Posterior cingulate gyrus (tissue), 11 donors: ENCODE measurements at regions of chr3 and their contacts with region 1.

Region 1: DNA sequence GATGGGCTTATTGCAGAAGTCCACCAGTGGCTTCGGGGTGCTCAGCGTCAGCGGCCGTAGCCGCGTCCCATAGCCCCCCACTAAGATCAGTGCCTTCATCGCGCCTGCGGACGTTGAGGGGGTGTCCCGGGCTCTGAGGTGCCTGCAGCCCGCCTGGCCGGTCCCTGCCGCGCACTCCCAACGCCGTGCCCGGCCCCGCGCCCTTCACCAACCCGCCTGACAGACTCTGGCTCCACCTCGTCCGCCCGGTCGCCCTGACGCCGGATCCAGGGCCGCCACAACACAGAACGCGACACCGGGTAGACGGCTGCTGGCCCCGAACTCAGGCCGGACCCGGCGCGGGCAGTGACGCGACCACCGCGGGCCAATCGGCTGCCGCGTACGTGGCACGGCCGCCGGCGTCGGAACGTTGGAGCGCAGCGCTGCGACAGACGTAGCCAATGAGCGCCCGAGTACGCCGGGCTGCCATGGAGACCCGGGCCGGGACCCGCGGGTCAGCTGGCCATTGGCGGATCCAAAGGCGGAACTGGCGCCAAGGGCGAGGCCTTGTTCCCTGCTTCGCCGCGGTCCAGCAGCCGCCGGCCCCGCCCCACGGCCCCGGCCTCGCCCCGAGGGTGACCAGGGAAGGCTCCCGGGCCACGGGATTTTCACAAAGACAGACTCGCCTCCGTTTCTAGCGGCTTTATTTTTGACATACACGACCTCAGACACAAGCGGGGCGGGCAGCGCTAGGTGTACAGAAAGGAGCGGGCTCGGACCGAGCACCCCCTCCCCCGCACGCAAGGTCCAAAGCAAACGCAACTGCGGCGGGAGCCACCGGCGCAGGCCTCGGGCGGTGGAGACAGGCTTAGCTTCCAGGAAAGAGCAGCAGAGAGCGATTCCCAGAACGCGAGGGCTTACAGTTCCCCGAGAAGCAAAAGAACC is at the start of gene GMPPB:
- DNase-seq: peak; percentile 92 to 100 (median 97)

Region 2: DNA sequence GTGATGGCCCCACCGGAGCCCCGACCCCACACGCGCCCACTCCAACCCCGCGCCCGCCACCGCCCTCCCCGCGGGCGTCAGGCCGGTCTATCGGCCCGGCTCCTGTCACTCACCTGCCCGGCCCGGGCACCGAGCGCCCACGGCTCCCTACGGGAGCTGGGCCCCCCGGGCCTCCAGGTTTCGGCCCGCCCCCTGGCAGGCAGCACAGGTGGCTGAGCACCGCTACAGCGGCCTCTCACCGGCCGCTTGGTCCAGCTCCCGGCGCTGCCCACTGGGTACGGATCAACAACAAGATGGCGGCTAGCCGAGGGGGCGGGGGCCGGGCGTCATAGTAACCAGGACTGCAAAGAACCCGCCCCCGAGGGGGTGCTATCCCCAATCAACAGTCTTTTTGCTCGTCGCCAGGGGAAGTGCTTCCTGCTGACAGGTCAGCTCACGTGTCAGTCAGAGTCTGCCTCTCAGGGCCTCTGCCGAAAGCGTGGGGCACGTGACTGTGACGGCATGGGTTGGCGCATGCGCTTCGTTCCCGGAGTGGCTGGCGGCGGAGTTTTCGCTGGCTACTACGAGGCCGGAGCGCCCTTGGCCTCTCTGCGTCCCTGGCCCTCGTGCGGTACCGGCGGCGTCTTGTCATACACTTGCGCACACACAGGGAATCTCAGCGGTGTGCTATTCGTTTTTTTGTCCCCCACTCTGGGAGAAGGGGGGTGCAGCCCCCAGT is 62.5 kb after region 1 on chr3 and contains the start of gene IP6K1:
- intact Hi-C with region 1: loop called (anchors 5 kb)
- DNase-seq: peak; percentile 100

Region 3: GRCh38 chr3:49802719-49803464 is 79.0 kb after region 1 on chr3 and contains the start of gene INKA1:
- intact Hi-C with region 1: loop called (anchors 5 kb)
- DNase-seq: peak; percentile 80 to 98 (median 90)

Region 4: DNA sequence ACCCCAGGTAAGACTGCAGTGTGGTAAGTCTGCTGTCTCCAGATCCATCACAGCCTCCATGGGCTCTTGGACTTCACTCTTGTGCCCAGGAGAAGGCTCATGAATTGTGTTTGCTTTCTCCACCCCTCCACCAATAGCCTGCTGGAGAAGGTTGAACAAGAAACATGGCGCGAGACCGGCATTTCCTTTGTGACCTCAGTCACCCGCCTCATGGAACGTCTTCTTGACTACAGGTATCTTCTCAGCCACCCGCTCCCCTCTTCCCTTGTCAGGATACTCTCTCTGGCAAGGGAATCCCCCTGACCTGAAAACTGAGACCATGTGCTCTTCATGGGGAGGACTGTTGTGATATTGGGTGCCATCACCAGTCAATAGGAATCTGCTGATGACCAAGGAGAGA is 1609.1 kb after region 1 on chr3:
- intact Hi-C with region 1: no loop called
- DNase-seq: no peak